ENCODE measurements at regions of chr1 and their contacts with region 1.

Region 1: GRCh38 chr1:244680667-244681066 is 27.7 kb downstream of the DESI2 start:
- DNase-seq: no peak
- ATAC-seq: no peak
- H3K4me3 ChIP-seq: no peak overlapping the region
- H3K27ac ChIP-seq: no peak overlapping the region
- H3K4me1 ChIP-seq: peaks cover 0 to 49% (median 21%) of the 10 kb centered on the region in 9 donors
- H3K27me3 ChIP-seq: no peaks in the 10 kb centered on the region
- CTCF ChIP-seq: no peak

Region 2: DNA sequence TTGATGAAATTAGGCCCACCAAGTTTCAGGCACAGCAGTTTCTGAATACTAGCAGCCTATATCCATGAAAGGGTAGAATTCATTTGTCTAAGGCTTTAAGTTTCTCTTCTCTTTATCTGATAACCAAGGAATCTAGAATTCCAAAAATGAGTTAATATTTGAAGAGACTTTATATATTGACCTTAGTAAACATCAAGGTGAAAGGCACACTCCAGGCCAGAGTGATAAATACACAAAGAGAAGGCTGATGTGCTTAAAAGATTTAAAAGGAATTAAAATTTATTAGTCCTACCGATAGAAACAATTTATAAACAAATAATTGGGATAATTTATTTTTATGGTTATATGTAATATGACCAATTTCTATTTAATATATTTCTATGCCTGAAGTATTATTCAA is 121.1 kb before region 1 on chr1:
- intact Hi-C with region 1: loop called in 1 of 10 experiments (anchors 5 kb)
- DNase-seq: no peak
- ATAC-seq: no peak
- H3K4me3 ChIP-seq: no peak overlapping the region
- H3K27ac ChIP-seq: no peak overlapping the region
- H3K4me1 ChIP-seq: no peaks in the 10 kb centered on the region
- H3K27me3 ChIP-seq: no peaks in the 10 kb centered on the region
- CTCF ChIP-seq: no peak

Region 3: DNA sequence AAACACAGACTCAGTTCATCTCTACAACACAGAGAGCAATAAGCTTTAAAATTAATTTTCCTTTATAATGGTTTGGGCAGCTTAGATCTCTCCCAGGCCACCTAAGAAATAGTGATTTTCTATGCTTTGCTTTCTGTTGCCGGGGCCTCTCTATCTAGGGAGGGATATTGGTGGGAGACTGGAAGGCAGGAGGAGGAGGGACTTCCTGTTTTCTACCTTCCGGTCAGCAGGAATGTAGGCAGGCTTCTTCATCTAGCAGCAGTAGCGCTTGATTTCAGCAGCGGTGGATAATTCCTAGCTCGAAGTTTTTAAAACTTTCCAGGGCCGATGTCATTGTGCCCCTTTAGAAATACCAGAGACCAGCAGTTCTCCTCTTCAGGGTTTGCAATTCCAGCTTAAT is 32.8 kb before region 1 on chr1:
- intact Hi-C with region 1: no loop called
- DNase-seq: no peak
- ATAC-seq: no peak
- H3K4me3 ChIP-seq: no peak overlapping the region
- H3K27ac ChIP-seq: no peak overlapping the region
- H3K4me1 ChIP-seq: peaks cover 0 to 6% (median 0%) of the 10 kb centered on the region in 9 donors
- H3K27me3 ChIP-seq: no peaks in the 10 kb centered on the region
- CTCF ChIP-seq: no peak

Measured in heart right ventricle (tissue), 16 donors.